Activated CD4-positive, alpha-beta T cell treated with anti-CD3 and anti-CD28 coated beads for 36 hours (primary cell): ENCODE measurements at regions of chr14 and their contacts with region 1.

Region 1: DNA sequence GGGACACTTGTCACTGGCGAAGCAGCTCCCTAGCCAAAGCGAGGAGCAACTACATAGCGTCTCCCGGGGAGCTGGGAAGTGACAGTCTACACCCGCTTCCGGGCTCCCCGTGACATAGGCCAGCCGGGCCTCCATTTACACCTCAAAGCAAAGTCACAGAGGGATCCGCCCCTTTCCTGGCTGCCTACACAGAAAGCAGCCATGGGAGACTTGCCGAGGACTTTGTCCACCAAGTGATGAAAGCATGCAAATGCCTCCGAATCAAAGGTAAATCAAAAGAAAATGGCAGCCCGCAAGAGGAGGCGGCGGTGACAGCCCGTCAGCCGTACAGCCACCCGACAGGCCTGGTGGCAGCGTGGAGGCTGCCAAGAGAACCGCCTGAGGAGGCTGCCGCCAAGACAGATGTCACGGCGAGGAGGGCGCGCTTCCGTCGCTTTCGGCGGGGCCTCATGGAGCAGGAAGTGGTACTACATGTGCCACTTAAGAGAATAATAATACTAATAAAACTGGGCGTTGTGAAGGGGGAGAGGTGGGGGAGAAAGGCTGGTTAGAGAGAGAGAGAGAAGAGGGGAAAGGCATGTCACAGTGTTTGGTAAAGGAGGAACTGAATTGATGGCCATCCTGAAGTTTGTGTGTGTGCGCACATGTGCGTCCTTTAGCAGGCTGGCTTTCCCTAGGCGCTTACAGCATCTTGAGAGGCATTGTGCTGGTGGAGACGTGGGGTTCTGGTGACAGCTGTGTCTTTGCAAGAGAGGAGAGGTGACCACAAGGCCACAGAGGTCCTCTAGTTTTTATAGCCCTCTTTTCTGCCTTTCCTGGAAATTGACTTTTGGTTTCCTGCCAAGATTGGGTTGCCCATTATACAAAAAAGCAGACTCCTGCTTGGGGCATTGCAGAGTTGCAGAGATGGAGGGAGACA is 661.7 kb downstream of the VRK1 start:
- DNase-seq: peak; percentile 89
- ATAC-seq: peak; percentile 81
- H3K4me3 Mint-ChIP-seq: peak overlapping the region; percentile 87
- H3K27ac Mint-ChIP-seq: peak overlapping the region; percentile 98
- H3K4me1 Mint-ChIP-seq: peaks cover 41% of the 10 kb centered on the region
- H3K27me3 Mint-ChIP-seq: no peaks in the 10 kb centered on the region

Region 2: GRCh38 chr14:97380539-97380941 is 78.4 kb before region 1 on chr14:
- CTCF ChIA-PET with region 1: interaction called, 3 read pairs
- POLR2A ChIA-PET with region 1: no interaction called
- intact Hi-C with region 1: loop called (anchors 1 to 5 kb)
- DNase-seq: peak; percentile 88
- ATAC-seq: peak; percentile 99
- H3K4me3 Mint-ChIP-seq: no peak overlapping the region
- H3K27ac Mint-ChIP-seq: no peak overlapping the region
- H3K4me1 Mint-ChIP-seq: peaks cover 46% of the 10 kb centered on the region
- H3K27me3 Mint-ChIP-seq: no peaks in the 10 kb centered on the region

Region 3: DNA sequence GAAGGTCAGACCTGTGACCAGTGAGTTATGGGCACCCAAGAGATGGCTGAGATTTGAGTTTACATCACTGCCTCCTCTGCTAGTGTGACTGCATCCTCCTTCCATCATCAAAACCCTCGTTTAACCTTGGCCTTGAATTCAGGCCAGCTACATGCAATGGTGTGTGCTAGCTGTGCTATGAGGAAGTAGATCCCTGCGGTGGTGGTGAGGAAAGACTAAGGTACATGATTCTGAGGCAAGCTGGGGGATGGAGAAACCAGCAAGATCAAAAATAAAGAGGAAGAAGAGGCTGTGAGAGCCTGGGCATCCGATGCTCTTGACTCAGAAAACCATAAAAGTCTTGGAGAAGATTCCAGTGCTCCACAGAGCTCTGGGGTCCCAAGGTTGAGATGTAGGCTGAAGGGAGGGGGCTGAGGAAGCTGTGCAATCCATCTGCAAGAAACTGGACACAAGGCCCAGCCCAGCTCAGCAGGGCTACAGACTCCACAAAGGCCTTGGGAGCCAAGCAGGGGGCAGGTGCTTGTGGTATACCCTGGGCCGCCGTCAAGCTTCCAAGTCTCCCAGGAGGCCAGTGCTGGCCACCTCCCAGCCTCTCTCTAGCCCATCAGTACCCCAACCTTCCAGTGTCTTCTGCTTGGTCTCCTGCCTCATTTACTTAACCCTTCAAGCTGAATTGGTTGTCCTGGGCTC is 113.1 kb after region 1 on chr14:
- CTCF ChIA-PET with region 1: no interaction called
- POLR2A ChIA-PET with region 1: no interaction called
- intact Hi-C with region 1: no loop called
- DNase-seq: no peak
- ATAC-seq: no peak
- H3K4me3 Mint-ChIP-seq: no peak overlapping the region
- H3K27ac Mint-ChIP-seq: no peak overlapping the region
- H3K4me1 Mint-ChIP-seq: peaks cover 6% of the 10 kb centered on the region
- H3K27me3 Mint-ChIP-seq: no peaks in the 10 kb centered on the region

Region 4: DNA sequence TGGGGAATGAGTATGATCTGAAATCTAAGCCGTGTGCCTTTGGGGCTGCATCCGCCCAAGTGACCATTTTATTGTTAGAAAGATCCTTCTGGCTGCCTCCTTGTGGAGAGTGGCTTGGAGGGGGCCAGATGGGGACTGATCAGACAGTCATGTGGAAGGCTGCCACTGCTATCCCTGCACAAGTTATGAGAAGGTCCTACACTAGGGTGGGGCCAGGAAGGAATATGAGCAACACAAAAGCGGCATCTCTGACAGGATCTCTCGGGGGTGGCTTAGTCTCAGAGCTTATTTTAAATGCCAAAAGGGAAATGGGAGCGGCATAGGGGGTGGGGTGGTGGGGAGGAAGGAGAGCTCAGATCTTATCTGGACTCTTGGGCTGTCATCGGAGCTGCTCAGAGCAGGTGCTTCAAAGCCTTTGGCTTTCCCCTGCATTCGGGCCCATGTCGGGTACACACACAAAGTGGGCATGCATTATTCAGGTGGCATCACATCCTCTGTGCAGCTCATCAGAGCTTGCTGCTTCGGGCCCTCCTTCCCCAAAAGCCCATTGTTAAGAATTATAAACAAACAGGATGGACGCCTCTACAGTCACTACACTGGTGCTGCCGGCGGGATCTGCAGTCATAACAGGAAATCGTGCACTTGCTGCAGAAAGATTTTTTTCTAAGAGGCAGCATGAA is 143.7 kb after region 1 on chr14:
- CTCF ChIA-PET with region 1: interaction called, 4 read pairs
- POLR2A ChIA-PET with region 1: no interaction called
- intact Hi-C with region 1: loop called in 1 of 2 experiments (anchors 5 kb)
- DNase-seq: peak; percentile 77
- ATAC-seq: peak; percentile 85
- H3K4me3 Mint-ChIP-seq: no peak overlapping the region
- H3K27ac Mint-ChIP-seq: no peak overlapping the region
- H3K4me1 Mint-ChIP-seq: peaks cover 11% of the 10 kb centered on the region
- H3K27me3 Mint-ChIP-seq: no peaks in the 10 kb centered on the region

Region 5: DNA sequence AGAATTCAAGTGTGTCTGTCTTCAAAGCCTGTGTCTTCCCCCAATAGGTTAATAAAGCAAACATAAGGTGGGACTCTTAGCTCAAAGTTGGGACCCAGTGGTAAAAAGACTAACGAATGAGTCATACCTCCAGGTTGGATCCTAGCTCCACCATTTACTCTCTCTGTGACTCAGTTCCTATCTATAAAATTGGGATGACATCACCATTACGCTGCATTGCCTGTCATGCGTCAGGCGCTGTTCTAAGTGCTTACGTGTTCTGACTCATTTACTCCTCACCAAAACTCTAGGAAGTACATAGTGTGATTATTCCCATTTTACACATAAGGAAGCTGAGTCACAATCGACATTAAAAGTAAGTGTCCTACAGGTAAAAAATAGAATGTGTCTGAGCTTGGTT is 254.1 kb after region 1 on chr14:
- CTCF ChIA-PET with region 1: no interaction called
- POLR2A ChIA-PET with region 1: no interaction called
- intact Hi-C with region 1: loop called in 1 of 2 experiments (anchors 5 kb)
- DNase-seq: peak; percentile 63
- ATAC-seq: peak; percentile 94
- H3K4me3 Mint-ChIP-seq: no peak overlapping the region
- H3K27ac Mint-ChIP-seq: peak overlapping the region; percentile 67
- H3K4me1 Mint-ChIP-seq: peaks cover 60% of the 10 kb centered on the region
- H3K27me3 Mint-ChIP-seq: no peaks in the 10 kb centered on the region

Region 6: GRCh38 chr14:98103705-98104104 is 644.8 kb after region 1 on chr14:
- CTCF ChIA-PET with region 1: no interaction called
- POLR2A ChIA-PET with region 1: no interaction called
- intact Hi-C with region 1: loop called in 1 of 2 experiments (anchors 5 kb)
- DNase-seq: peak; percentile 27
- ATAC-seq: no peak
- H3K4me3 Mint-ChIP-seq: no peak overlapping the region
- H3K27ac Mint-ChIP-seq: no peak overlapping the region
- H3K4me1 Mint-ChIP-seq: peaks cover 52% of the 10 kb centered on the region
- H3K27me3 Mint-ChIP-seq: no peaks in the 10 kb centered on the region

Region 7: GRCh38 chr14:98234208-98234607 is 775.3 kb after region 1 on chr14:
- CTCF ChIA-PET with region 1: no interaction called
- POLR2A ChIA-PET with region 1: no interaction called
- intact Hi-C with region 1: loop called in 1 of 2 experiments (anchors 5 kb)
- DNase-seq: peak; percentile 69
- ATAC-seq: peak; percentile 95
- H3K4me3 Mint-ChIP-seq: no peak overlapping the region
- H3K27ac Mint-ChIP-seq: peak overlapping the region; percentile 82
- H3K4me1 Mint-ChIP-seq: peaks cover 76% of the 10 kb centered on the region
- H3K27me3 Mint-ChIP-seq: no peaks in the 10 kb centered on the region